ENCODE measurements at regions of chr6 and their contacts with region 1.

Region 1: DNA sequence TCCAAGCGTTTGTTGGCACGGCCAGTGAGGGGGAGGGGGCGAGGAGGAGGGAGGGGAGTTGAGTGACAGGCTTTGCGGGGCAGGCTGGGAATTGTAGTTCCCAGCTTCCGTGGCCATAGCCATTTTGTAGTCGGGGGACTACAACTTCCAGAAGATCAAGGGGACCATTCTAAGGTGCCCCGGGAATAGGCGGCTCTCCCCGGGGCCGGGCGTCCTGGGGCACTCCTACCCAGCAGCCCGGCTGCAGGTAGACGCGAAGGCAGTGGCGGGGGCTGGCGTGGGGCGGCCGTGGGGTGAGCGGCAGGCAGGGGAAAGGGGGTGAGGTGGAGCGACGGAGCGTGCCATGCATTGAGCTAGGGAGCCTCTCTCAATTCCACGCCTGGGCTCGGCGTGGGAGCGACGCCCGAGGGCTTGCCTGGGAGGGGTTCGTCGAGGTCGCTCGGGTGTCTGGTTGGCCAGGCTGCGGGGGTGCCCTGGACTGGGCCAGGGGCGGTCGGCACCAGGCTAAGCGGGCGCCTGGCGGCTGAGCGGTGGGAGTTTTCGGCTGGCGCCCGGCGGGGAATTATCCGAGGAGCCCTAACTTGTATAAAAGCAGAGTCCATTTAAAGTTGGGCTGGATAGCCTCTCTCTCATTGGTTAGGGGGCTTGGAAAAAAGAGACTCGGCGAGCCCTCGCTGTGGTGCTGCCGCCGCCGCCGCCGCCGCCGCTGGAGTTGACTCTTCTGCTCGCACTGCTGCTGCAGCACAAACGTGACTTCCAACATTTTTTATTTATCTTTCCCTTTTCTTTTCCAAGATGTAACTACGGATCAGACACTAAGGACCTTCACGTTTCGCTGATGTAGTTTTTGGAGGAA is at the start of gene JARID2:
- DNase-seq: peak; percentile 92
- total RNA-seq, gene JARID2: 4.5 TPM

Region 2: GRCh38 chr6:14210663-14211561 is 1034.7 kb before region 1 on chr6:
- intact Hi-C with region 1: loop called (anchors 5 kb)
- DNase-seq: peak; percentile 95

Region 3: DNA sequence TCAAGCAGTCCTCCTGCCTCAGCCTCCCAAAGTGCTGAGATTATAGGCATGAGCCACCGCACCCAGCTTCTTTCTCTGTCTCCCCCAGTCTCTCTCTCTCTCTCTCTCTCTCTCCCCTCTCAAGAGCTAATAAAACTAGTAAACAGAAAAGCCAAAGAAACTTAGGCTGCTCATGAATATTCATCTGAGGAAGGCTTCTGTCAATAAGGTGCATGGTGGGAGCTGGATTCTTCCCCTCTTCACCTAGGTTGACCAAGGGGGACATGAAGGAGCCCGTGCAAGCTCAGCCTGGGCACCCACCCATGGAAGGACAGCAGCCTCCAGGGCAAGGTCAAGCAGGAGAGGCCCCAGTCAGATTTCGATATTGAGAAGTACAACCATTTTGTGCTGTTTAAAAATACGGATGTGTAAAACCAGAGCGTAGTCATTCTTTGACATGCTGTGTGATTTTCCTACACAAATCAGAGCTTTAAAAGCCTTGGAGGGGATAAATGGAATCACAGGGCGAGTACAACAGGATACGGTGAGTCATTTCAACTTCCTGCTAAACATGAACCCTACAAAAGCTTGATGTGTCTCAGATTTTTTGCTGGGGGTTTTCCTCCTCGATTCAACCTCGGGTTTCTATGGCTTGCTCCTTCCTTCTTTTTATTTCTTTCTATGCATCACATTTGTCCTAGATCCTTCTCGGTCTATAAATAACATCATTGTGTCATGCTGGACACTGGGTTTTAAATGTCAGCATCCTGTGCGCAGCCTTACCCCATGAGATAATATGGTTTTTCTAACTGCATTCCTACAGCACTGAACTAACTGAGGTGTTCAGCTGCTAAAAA is 368.6 kb before region 1 on chr6:
- intact Hi-C with region 1: loop called (anchors 5 kb)
- DNase-seq: no peak

Region 4: DNA sequence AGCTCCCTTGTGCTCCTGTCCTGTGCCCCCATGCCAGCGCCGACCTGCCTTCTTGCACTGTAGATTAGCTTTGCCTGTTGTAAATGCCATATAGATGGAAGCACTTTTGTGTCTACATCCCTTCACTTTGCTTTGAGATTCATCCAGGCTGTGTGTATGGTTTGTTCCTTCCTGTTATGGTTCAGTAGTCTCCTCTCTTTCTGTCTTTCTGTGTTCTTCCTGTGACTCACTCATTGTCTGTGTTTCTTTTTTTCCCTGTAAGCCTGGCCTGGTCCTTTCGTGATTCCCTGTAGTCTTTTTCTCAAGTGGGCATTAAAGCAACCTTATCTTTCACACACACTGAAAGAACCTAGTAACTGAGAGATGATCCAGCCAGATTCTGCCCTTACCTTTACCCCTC is 66.9 kb after region 1 on chr6:
- intact Hi-C with region 1: loop called (anchors 5 kb)
- DNase-seq: no peak

Region 5: DNA sequence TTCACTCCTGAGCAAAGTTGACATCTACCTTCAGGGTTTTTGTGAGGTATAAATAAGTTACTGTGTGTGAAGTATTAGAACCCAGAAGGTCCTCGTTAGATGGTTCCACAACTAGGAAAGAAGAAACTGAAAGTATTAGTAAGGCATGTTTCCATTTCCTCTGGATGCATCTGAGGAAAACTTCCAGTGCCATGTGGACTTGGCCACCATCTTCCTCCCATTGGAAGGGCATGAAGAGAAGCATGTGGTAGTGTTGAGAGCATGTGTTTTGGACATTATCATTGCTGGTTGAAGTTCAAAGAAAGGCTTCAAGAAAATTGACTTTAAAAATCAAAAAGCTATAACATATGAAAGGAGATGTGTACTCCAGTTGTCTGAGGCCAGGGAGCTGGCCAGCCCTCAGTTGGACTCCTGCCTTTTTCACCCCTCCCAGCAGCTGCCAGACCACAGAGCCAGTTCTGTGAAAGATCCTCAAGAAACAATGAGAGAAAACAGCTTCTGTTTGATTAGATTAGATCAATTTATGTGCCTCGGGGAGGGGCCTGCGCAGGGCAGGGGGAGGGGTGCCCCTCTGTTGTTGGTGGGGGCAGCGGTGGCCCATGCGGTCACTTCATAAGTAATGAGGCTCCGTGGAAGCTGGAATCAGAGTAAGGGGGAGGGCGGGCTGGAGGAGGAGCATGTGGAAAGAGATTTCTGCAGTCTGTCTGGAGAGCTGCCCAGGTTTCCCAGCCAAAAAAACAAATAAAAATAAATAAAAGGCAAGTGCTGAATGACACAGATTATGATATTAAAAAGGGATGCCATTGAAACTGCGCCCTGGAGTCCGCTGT is 154.3 kb after region 1 on chr6:
- intact Hi-C with region 1: loop called (anchors 5 kb)
- DNase-seq: peak; percentile 82

Region 6: DNA sequence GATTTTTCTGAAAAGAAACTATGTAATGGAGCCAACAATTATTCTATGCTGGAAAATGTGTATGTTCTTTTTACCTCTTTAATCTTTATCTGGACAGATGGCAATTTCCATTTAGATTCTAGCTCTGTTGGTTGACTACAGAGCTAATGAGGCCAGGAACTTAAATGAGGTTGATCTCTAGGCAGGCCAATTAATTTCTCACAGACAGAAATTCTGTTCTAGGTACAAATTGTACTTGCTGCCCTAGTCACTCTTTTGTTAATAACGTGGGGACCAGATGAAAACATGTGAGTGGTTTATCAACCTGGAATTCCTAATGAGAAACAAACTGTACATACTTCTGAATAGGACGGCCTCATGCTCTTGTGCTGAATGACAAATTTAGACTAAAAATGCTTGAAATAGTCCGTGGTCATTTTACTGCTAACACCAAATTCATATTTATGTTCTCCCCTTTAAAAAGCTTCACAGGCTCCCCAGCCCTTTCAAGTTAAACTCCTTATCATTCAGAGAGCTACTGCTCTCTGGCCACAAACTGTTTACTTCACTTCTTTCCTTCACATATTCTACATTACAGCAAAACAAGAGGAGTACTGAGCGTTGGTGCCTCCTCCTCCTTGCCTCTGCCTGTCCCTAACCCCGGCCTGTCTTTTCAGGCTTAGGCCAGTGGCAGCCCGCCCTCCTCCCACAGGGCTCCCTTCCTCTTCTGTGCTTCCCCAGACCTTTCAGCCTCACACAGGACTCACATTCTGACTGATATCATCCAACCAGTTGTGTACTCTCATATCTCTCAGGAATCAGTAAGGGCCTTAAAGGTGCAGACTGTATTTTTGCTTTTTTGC is 375.8 kb after region 1 on chr6:
- intact Hi-C with region 1: loop called (anchors 10 kb)
- DNase-seq: peak; percentile 86

Measured in cardiac septum (tissue), 1 donor.